ENCODE measurements at regions of chr21 and their contacts with region 1.

Region 1: DNA sequence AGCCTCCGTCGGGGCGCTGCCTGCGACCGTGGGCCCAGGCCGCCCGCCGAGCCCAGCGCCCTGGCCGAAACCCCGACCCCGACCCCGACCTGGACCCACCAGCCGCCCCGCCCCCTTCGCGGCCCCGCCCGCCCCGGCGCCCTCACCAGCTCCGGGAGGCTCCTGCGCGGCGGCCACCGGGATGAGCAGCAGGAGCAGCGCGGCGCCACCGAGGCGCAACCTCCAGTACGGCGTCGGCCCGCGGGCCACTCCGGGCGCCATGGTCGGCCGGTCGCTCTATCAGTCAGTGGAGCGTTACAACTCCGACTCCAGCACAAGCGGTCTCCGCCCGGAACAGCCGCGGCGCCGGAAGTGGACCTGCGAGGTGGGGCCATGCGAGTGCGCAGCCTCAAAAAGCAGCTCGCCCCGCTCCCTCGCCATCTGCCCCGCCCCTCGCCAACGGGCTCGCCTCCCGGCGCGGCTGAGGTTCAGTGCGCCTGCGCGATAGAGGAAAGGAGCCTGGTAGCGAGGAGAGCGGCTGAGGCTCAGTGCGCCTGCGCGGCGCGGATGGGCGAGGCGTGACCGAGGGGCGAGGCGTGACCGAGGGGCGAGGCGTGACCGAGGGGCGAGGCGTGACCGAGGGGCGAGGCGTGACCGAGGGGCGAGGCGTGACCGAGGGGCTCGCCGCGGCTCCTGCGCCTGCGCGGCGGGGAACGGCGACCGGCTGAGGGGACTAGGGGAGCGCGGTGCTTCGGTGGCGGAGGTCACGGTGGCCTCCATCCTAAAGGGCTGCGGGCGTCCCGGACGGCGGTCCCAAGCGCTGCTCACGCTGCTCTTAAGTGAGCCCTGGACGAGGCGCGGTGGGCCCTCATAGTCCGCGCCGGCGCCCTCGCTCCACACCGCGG is at the start of gene PTTG1IP:
- DNase-seq: peak; percentile 100
- H3K4me3 Mint-ChIP-seq: peak within 1 kb of the TSS; percentile 97
- H3K27ac Mint-ChIP-seq: peak within 1 kb of the TSS; percentile 93
- H3K4me1 Mint-ChIP-seq: peaks cover 52% of the 10 kb centered on the region
- H3K27me3 Mint-ChIP-seq: no peaks in the 10 kb centered on the region
- total RNA-seq, gene PTTG1IP: 44.2 and 46.5 TPM in 2 replicates

Region 2: DNA sequence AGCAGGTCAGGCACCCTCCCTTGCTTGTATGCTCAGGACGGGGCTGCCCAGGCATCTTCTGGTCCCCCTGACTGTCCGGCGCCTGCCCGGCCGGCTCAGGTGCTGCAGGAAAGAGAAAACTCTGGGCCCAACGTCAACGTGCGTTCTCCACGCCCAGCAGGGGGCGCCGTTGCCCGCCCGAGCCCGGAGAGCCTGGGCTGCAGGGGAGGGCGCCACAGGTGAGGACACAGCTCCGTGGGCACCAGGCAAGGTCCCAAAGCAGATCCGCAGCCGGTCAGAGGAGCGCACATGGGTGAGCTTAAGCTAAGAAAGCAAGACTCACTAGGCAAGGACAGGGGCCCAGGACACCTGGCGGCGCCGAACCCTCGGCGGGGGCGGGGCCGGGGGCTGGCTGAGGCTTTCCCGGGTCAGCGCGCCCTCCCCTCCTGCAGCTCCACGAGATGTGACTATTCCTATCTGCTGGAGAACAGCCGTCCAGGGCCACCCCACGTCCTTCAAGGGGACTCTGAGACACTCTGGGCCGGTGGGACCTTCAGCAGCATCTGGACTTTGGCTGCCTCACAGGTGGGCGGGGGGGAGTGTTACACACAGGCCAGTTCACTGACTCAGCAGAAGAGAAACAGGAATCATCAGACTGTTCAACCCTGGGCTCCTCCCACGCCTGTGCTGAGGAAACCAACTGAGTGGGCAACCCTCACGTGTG is 362.9 kb before region 1 on chr21:
- intact Hi-C with region 1: loop called (anchors 2 kb)
- DNase-seq: peak; percentile 94
- H3K4me3 Mint-ChIP-seq: peak overlapping the region; percentile 15
- H3K27ac Mint-ChIP-seq: no peak overlapping the region
- H3K4me1 Mint-ChIP-seq: no peaks in the 10 kb centered on the region
- H3K27me3 Mint-ChIP-seq: no peaks in the 10 kb centered on the region

Region 3: DNA sequence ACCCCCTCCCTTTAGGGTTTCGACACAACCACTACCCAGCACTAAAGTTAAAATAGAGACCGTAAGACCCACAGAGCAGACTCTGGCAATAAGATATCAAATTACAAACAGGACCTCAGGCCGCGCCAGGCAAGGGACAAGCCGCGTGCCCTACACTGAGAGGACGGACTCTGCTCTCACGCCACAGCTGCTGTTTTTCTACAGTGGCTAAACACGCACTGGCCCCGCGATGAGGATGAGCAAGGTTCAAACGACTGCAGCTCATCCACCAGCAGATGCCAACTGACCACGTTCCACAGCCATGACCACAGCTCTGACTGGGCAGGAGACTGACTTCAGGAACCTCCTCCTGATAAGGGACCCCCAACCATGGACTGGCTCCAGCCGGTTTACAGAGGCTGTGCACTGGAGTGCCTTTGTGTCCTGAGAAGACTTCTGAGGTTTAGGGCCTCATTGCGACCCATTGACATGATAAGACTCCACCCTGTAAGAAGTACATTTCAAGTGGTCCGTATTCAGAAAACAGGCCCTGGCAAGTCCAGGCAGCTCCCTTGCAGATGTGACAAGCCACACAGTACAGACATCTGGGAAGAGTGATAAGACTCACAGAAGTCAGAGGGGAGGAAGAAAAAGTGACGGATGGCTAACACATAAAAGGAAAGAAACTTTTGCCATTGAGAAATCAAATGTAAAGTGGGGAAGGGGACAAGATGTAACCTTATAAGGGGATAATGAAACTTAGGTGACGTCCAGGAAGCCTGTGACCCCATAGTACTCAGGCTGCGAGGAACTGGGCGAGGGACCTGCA is 279.8 kb before region 1 on chr21:
- intact Hi-C with region 1: no loop called
- DNase-seq: no peak
- H3K4me3 Mint-ChIP-seq: no peak overlapping the region
- H3K27ac Mint-ChIP-seq: no peak overlapping the region
- H3K4me1 Mint-ChIP-seq: no peaks in the 10 kb centered on the region
- H3K27me3 Mint-ChIP-seq: peaks cover 7% of the 10 kb centered on the region

Region 4: GRCh38 chr21:44742418-44743153 is 131.0 kb before region 1 on chr21:
- intact Hi-C with region 1: no loop called
- DNase-seq: peak; percentile 66
- H3K4me3 Mint-ChIP-seq: no peak overlapping the region
- H3K27ac Mint-ChIP-seq: no peak overlapping the region
- H3K4me1 Mint-ChIP-seq: peaks cover 2% of the 10 kb centered on the region
- H3K27me3 Mint-ChIP-seq: peaks cover 28% of the 10 kb centered on the region

Region 5: GRCh38 chr21:44817506-44817880 is 56.1 kb before region 1 on chr21:
- intact Hi-C with region 1: loop called (anchors 1 kb)
- DNase-seq: peak; percentile 99
- H3K4me3 Mint-ChIP-seq: peak overlapping the region; percentile 79
- H3K27ac Mint-ChIP-seq: peak overlapping the region; percentile 20
- H3K4me1 Mint-ChIP-seq: peaks cover 6% of the 10 kb centered on the region
- H3K27me3 Mint-ChIP-seq: no peaks in the 10 kb centered on the region

Region 6: GRCh38 chr21:44911389-44912157 is 38.0 kb after region 1 on chr21:
- intact Hi-C with region 1: loop called (anchors 2 kb)
- DNase-seq: peak; percentile 86
- H3K4me3 Mint-ChIP-seq: peak overlapping the region; percentile 67
- H3K27ac Mint-ChIP-seq: peak overlapping the region; percentile 76
- H3K4me1 Mint-ChIP-seq: peaks cover 55% of the 10 kb centered on the region
- H3K27me3 Mint-ChIP-seq: no peaks in the 10 kb centered on the region